Common myeloid progenitor, CD34-positive (primary cell): ENCODE measurements at regions of chr9 and their contacts with region 1.

Region 1: GRCh38 chr9:89529243-89530035 is 31.5 kb upstream of the SEMA4D start:
- DNase-seq: peak in 2 of 3 donors; percentile 51 to 64
- H3K4me3 ChIP-seq: peak overlapping the region in 1 of 7 experiments; percentile 11
- H3K27ac ChIP-seq: no peak overlapping the region
- H3K4me1 ChIP-seq: peaks cover 14 to 86% (median 40%) of the 10 kb centered on the region in 4 experiments
- H3K27me3 ChIP-seq: no peaks in the 10 kb centered on the region

Region 2: DNA sequence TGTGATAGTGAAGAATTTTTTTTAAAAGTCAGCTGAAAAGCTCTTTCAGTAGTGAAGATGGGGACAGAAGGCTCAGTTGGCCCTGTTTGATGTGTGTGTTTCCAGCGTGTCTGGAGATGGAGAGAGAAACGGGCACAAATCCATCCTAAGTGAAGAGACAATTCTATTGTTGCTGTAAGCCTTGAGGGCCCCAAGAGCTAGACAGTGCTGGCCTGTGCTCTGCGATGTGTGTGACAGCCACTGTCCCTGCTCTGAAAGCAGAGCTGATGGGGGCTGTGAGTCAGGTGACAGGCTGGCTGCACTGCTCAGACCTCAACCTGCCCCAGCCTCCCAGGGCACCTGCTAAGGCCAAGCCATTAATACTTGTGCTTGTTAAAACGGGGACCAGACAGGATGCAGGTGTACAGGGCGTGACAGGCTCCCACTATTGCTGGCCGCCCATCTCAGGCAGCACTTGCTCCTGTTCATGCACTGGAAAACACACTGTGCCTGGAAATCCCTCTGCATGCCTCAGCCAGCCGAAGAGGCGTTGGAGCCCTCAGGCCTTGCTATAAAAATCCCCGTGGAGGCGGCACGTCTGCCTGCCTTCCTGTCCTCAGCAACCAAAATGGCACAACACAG is 13.1 kb after region 1 on chr9:
- CTCF ChIA-PET with region 1: interaction called, 41 read pairs
- POLR2A ChIA-PET with region 1: no interaction called
- DNase-seq: no peak
- H3K4me3 ChIP-seq: no peak overlapping the region
- H3K27ac ChIP-seq: no peak overlapping the region
- H3K4me1 ChIP-seq: peaks cover under 1 to 31% (median 3%) of the 10 kb centered on the region in 4 experiments
- H3K27me3 ChIP-seq: no peaks in the 10 kb centered on the region